Mammary epithelial cell (primary cell): ENCODE measurements at regions of chr3 and their contacts with region 1.

Region 1: DNA sequence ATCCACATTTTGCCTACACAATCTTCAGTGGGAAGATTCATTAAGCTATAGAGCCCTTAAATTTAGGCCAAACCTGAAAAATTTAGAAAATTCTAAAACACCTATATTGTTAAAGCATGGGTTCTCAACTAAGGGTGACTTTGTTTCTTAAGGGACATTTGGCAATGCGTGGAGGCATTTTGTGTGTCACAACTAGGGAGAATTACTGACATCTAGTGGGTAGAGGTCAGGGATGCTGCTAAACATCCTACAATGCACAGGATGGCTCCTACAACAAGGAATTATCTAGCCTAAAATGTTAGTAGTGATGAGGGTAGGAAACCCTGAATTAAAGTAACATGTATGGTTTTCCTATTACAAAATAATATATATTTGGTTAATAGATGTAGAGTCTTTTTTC is 55.8 kb downstream of the TBC1D5 start:
- DNase-seq: no peak
- H3K4me3 ChIP-seq: no peak overlapping the region
- H3K27ac ChIP-seq: no peak overlapping the region
- H3K4me1 ChIP-seq: no peaks in the 10 kb centered on the region
- H3K27me3 ChIP-seq: no peaks in the 10 kb centered on the region
- CTCF ChIP-seq: peak; percentile 28 to 50

Region 2: GRCh38 chr3:17431004-17431403 is 255.6 kb before region 1 on chr3:
- CTCF ChIA-PET with region 1: no interaction called
- dilution Hi-C with region 1: no loop called
- in situ Hi-C with region 1: no loop called
- intact Hi-C with region 1: loop called (anchors 1 kb)
- DNase-seq: peak; percentile 23
- H3K4me3 ChIP-seq: no peak overlapping the region
- H3K27ac ChIP-seq: no peak overlapping the region
- H3K4me1 ChIP-seq: no peaks in the 10 kb centered on the region
- H3K27me3 ChIP-seq: no peaks in the 10 kb centered on the region
- CTCF ChIP-seq: peak; percentile 32 to 53

Region 3: GRCh38 chr3:17473761-17474160 is 212.9 kb before region 1 on chr3:
- CTCF ChIA-PET with region 1: no interaction called
- dilution Hi-C with region 1: no loop called
- in situ Hi-C with region 1: no loop called
- intact Hi-C with region 1: loop called (anchors 1 kb)
- DNase-seq: no peak
- H3K4me3 ChIP-seq: no peak overlapping the region
- H3K27ac ChIP-seq: no peak overlapping the region
- H3K4me1 ChIP-seq: no peaks in the 10 kb centered on the region
- H3K27me3 ChIP-seq: no peaks in the 10 kb centered on the region
- CTCF ChIP-seq: peak; percentile 19 to 32

Region 4: DNA sequence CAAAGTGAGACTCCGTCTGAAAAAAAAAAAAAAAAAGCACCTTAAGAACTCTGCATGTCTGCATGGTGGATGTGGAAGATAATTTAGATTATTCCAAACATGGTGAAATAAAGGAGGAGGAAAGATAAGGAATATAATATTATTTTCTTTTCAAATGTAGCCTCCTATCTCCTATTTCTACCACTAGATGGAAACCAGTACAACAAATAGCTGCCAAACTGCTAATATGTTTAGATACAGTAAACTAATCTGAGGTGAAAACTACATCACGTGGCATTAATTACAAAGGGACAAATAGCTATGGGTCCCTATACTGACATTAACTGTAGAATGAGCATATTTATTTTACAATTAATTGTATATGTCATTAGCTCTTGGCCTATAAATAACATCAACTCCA is 142.0 kb before region 1 on chr3:
- CTCF ChIA-PET with region 1: interaction called, 4 read pairs
- dilution Hi-C with region 1: no loop called
- in situ Hi-C with region 1: no loop called
- intact Hi-C with region 1: loop called (anchors 10 kb)
- DNase-seq: no peak
- H3K4me3 ChIP-seq: no peak overlapping the region
- H3K27ac ChIP-seq: no peak overlapping the region
- H3K4me1 ChIP-seq: no peaks in the 10 kb centered on the region
- H3K27me3 ChIP-seq: no peaks in the 10 kb centered on the region
- CTCF ChIP-seq: peak; percentile 16 to 25